Panc1 (cell line): ENCODE measurements at regions of chr16 and their contacts with region 1.

Region 1: GRCh38 chr16:81035398-81035974 is at the start of gene ATMIN:
- DNase-seq: peak; percentile 28
- ATAC-seq: peak; percentile 97
- H3K4me3 ChIP-seq: peak within 1 kb of the TSS; percentile 70 to 74
- H3K27ac ChIP-seq: peak within 1 kb of the TSS; percentile 76
- H3K4me1 ChIP-seq: no peaks in the 10 kb centered on the region; the same call in 1 of the 2 replicates
- H3K27me3 ChIP-seq: no peaks in the 10 kb centered on the region
- CTCF ChIP-seq: peak; percentile 98
- total RNA-seq, gene ATMIN: 28.4 TPM

Region 2: GRCh38 chr16:80988756-80989155 is 46.7 kb before region 1 on chr16:
- CTCF ChIA-PET with region 1: no interaction called
- POLR2A ChIA-PET with region 1: interaction called, 10 read pairs
- in situ Hi-C with region 1: no loop called
- intact Hi-C with region 1: no loop called
- DNase-seq: no peak
- ATAC-seq: no peak
- H3K4me3 ChIP-seq: no peak overlapping the region
- H3K27ac ChIP-seq: no peak overlapping the region
- H3K4me1 ChIP-seq: peaks cover 4% of the 10 kb centered on the region; the same call in 1 of the 2 replicates
- H3K27me3 ChIP-seq: no peaks in the 10 kb centered on the region
- CTCF ChIP-seq: no peak

Region 3: GRCh38 chr16:81737885-81738786 is 702.6 kb after region 1 on chr16:
- CTCF ChIA-PET with region 1: no interaction called
- POLR2A ChIA-PET with region 1: no interaction called
- in situ Hi-C with region 1: no loop called
- intact Hi-C with region 1: loop called (anchors 10 kb)
- DNase-seq: peak; percentile 61
- ATAC-seq: peak; percentile 94
- H3K4me3 ChIP-seq: peak overlapping the region; percentile 27 to 51
- H3K27ac ChIP-seq: no peak overlapping the region
- H3K4me1 ChIP-seq: no peaks in the 10 kb centered on the region
- H3K27me3 ChIP-seq: no peaks in the 10 kb centered on the region
- CTCF ChIP-seq: peak; percentile 84